GM10248 (cell line): ENCODE measurements at regions of chr22 and their contacts with region 1.

Region 1: DNA sequence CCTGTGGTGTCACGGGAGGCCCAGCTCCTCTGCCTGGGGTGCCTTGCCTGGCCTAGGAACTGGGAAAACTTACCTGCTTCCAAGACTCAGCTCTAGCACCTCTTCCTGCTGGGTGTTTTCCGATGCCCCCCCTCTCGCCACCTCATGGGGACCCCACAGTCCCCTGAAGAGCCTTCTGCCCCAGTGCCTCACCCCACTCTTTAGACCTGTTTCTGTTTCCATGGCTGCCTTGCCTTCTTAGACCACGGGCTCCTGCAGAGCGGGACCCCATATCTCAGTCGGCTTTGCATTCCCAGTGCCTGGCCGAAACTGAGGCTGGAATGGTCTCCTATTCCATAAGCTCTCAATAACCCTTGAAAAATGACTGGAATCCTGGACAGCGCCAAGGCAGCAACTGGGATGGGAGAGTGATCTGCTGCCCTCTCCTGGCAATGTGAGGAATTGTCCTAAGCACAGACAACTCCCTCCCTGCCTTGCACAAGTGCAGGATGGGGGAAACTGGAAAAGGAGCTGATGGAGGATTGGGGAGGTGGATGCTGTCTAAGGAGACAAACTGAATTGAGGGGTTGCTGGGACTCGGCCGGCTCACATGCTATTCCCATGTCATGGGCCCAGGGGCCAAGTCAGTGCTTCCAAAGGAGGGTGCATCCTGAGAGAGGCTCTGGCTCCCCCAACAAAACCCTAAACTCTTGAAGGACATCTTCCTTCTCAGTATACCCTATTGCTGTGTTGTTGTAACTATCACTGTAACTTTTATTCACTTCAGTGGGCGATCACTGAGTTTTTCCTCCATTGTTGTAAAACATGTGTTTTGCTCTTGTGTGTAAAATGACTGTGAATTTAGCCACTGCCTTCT is 26.6 kb upstream of the IL17RA start:
- DNase-seq: peak; percentile 71
- CTCF ChIP-seq: peak; percentile 91

Region 2: GRCh38 chr22:16917144-16918003 is 140.8 kb before region 1 on chr22:
- CTCF ChIA-PET with region 1: interaction called, 27 read pairs
- POLR2A ChIA-PET with region 1: no interaction called
- DNase-seq: peak; percentile 65
- CTCF ChIP-seq: peak; percentile 54

Region 3: GRCh38 chr22:16932577-16932976 is 125.6 kb before region 1 on chr22:
- CTCF ChIA-PET with region 1: interaction called, 11 read pairs
- POLR2A ChIA-PET with region 1: no interaction called
- DNase-seq: no peak
- CTCF ChIP-seq: peak; percentile 26

Region 4: GRCh38 chr22:17035246-17035645 is 22.9 kb before region 1 on chr22:
- CTCF ChIA-PET with region 1: interaction called, 10 read pairs
- POLR2A ChIA-PET with region 1: no interaction called
- DNase-seq: no peak
- CTCF ChIP-seq: no peak

Region 5: GRCh38 chr22:17047656-17048055 is 10.5 kb before region 1 on chr22:
- CTCF ChIA-PET with region 1: interaction called, 35 read pairs
- POLR2A ChIA-PET with region 1: no interaction called
- DNase-seq: no peak
- CTCF ChIP-seq: no peak

Region 6: GRCh38 chr22:17281440-17281841 is 223.3 kb after region 1 on chr22:
- CTCF ChIA-PET with region 1: no interaction called
- POLR2A ChIA-PET with region 1: no interaction called
- DNase-seq: no peak
- CTCF ChIP-seq: no peak